ENCODE measurements at regions of chr15 and their contacts with region 1.

Region 1: GRCh38 chr15:31338879-31339557 is 12.4 kb downstream of the KLF13 start:
- DNase-seq: peak in 5 of 10 donors; percentile 51 to 79 (median 65)
- H3K4me3 ChIP-seq: peak overlapping the region in 37 of 59 donors; percentile 0 to 53 (median 26)
- H3K27ac ChIP-seq: peak overlapping the region; percentile 59 to 100 (median 89)
- H3K27me3 ChIP-seq: no peaks in the 10 kb centered on the region
- CTCF ChIP-seq: no peak

Region 2: DNA sequence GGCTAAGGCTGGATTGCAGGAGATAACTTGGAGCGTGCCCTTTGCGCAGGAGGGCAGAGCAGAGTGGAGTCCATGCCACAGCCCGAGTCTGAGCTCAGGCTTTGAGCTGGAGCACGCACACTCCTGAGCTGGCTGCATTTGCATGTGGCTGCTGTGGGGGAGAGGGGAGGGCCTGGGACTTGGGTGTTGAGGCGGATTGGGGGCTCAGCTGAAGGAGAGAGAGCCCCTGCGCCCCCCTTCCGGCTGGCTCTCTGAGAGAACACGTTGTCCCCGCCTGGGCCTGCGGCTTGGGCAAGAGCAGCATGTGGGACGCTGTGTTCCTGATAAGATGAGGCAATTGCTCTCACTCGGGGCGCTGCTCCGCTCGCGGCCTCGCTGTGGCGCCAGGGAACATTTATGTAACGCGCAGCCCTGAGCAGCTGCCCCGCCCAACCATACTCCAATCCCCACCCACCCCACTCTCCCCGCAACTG is 26.7 kb after region 1 on chr15:
- intact Hi-C with region 1: loop called (anchors 2 to 5 kb)
- DNase-seq: peak; percentile 91 to 98 (median 96)
- H3K4me3 ChIP-seq: peak overlapping the region in 56 of 59 donors; percentile 0 to 58 (median 40)
- H3K27ac ChIP-seq: peak overlapping the region; percentile 76 to 100 (median 94)
- H3K27me3 ChIP-seq: no peaks in the 10 kb centered on the region
- CTCF ChIP-seq: peak in 51 of 56 donors; percentile 19 to 63 (median 42)

Region 3: DNA sequence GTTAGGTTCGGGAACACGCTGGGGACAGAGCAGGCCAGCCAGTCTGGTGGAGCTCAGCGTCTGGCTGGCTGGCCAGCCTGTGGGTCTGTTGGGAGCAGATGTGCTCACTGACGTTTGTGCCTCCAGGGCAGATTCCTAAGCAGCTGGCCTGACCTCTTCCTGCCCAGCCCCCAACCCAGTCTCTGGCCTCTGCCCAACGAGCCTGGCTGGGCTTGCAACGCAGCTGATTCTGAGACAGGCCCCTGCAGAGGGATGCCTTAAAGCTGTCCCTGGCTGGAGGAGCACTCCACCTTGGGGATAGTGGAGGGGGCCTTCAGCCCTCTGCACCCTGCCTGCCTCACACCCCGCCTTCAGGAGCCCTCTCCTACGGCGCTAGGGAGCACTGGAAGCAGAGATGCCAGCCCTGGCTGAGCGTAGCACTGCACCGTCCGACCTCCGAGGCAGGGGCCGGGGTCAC is 33.6 kb after region 1 on chr15:
- intact Hi-C with region 1: loop called in 1 of 2 experiments (anchors 5 kb)
- DNase-seq: peak in 6 of 10 donors; percentile 63 to 78 (median 74)
- H3K4me3 ChIP-seq: peak overlapping the region in 1 of 59 donors; percentile 1
- H3K27ac ChIP-seq: peak overlapping the region in 51 of 59 donors; percentile 0 to 100 (median 59)
- H3K27me3 ChIP-seq: no peaks in the 10 kb centered on the region
- CTCF ChIP-seq: peak in 5 of 56 donors; percentile 7 to 16 (median 12)

Region 4: GRCh38 chr15:31563421-31563820 is 224.4 kb after region 1 on chr15:
- intact Hi-C with region 1: no loop called
- DNase-seq: no peak
- H3K4me3 ChIP-seq: no peak overlapping the region
- H3K27ac ChIP-seq: no peak overlapping the region
- H3K27me3 ChIP-seq: no peaks in the 10 kb centered on the region
- CTCF ChIP-seq: no peak

Measured in dorsolateral prefrontal cortex (tissue), 120 donors.